Common myeloid progenitor, CD34-positive (primary cell): ENCODE measurements at regions of chr10 and their contacts with region 1.

Region 1: GRCh38 chr10:80186477-80186944 is 18.8 kb downstream of the ANXA11 start:
- DNase-seq: no peak
- H3K4me3 ChIP-seq: no peak overlapping the region
- H3K27ac ChIP-seq: peak overlapping the region in 1 of 2 experiments; percentile 75
- H3K4me1 ChIP-seq: peaks cover 15 to 32% (median 27%) of the 10 kb centered on the region in 4 experiments
- H3K27me3 ChIP-seq: no peaks in the 10 kb centered on the region

Region 2: DNA sequence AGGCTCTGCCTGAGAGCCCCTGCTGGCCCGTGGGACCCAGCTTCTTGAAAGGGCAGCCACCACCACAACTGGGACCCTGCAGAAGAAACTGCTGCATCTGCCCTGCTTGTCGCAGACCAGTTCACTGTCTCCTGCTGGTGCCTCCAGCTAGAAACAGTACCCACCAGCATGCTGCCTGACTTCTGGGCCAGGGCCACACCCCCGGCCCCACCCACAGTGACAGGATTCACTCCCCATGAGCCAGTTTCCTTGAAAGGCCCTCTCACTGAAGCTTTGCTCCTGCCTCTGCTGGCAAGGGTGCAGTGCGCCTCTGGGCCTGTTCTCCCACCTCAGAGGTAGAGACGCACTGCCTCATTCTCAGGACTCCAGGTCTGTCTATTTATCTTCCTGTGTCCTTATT is 13.6 kb before region 1 on chr10:
- CTCF ChIA-PET with region 1: interaction called, 11 read pairs
- POLR2A ChIA-PET with region 1: no interaction called
- DNase-seq: no peak
- H3K4me3 ChIP-seq: no peak overlapping the region
- H3K27ac ChIP-seq: no peak overlapping the region
- H3K4me1 ChIP-seq: peaks cover 0 to 3% (median 0%) of the 10 kb centered on the region in 4 experiments
- H3K27me3 ChIP-seq: no peaks in the 10 kb centered on the region